Heart left ventricle (tissue), 16 donors: ENCODE measurements at regions of chr14 and their contacts with region 1.

Region 1: GRCh38 chr14:102196039-102196901 is 56.6 kb downstream of the WDR20 start:
- DNase-seq: no peak
- ATAC-seq: no peak
- H3K4me3 ChIP-seq: no peak overlapping the region
- H3K27ac ChIP-seq: no peak overlapping the region
- H3K4me1 ChIP-seq: peaks cover 0 to 26% (median 6%) of the 10 kb centered on the region in 12 donors
- H3K27me3 ChIP-seq: no peaks in the 10 kb centered on the region
- CTCF ChIP-seq: no peak
- POLR2A ChIP-seq: no peak

Region 2: DNA sequence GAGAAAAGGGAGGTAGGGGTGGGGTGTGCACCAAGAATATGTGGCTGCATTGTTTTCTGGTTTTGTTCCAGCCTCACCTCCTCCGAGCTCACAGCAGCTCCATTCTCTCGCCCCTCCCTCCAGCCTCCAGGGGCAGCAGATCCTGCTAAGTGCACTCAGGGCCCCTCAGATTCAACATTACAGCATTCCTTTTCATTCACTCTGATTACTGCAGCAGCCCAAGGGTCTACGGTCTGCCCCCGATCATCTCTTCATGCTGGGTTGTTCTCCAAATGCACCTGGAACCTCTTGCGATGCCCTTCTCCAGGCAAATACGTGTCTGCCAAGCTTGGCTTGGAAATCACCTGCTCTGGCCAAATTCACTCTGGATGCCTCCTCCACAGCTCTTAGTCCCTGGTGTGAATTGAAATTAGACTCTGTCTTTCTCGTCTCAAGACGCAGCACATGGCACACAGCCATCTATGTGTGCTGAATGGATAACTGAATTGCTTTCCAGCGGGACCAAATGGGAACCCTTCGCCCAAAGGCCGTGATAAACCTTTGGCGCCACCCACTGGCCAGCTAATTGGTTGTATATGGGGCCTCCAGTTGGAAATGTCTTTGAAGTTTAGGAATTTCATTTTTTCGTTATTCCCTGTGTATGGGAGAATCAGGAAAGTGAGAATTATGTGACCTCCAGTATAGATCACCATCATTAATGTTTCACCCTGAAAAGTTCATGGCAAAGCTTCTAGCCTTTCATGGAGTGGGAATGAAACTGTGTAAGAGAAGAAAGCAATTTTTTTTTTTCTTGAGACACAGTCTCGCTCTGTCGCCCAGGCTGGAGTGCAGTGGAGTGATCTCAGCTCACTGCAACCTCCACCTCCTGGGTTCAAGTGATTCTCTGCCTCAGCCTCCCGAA is 99.8 kb before region 1 on chr14:
- intact Hi-C with region 1: no loop called
- DNase-seq: peak; percentile 83 to 91 (median 87)
- ATAC-seq: peak; percentile 81 to 91 (median 86)
- H3K4me3 ChIP-seq: no peak overlapping the region
- H3K27ac ChIP-seq: no peak overlapping the region
- H3K4me1 ChIP-seq: peaks cover 0 to 9% (median 0%) of the 10 kb centered on the region in 12 donors
- H3K27me3 ChIP-seq: no peaks in the 10 kb centered on the region
- CTCF ChIP-seq: peak; percentile 69 to 91 (median 83)
- POLR2A ChIP-seq: no peak

Region 3: DNA sequence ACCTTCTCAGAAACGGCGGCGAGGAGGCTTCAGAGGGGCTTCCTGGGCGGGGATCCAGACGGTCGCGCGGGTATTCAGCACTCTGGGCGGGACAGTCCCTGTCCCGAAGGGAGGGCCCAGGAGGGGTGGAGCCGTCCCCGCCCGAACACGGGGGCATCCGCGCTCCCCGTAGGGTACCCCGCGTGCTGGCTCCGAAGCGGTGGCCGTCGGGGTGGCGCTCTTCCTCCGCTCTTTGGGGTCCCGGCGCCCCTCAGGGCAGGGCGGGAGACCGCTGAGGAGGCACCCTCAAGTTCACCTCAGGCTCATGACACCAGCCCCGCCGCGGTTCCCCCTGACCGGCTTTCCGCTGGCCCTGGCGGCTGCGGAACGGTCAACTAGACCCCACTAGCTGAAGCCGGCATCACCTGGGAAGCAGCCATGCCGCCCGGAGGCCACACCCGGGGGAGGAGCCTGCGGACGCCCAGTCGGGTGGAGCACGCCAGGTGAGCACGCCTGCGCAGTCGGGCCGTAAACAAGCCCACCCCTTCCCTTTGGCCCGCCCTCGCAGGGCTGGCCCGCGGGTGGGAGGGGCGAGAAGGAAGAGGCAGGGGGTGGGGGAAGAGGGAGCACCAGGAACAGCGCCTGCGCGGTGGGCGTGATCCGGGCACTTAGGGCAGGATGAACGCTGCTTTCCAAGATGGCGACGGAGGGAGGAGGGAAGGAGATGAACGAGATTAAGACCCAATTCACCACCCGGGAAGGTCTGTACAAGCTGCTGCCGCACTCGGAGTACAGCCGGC is 56.8 kb before region 1 on chr14 and contains the start of gene WDR20:
- intact Hi-C with region 1: loop called in 1 of 10 experiments (anchors 5 kb)
- DNase-seq: peak; percentile 98 to 99 (median 99)
- ATAC-seq: peak; percentile 99 to 100 (median 100)
- H3K4me3 ChIP-seq: peak within 1 kb of the TSS; percentile 74 to 100 (median 96)
- H3K27ac ChIP-seq: peak within 1 kb of the TSS; percentile 30 to 92 (median 86)
- H3K4me1 ChIP-seq: peaks cover 0 to 35% (median 22%) of the 10 kb centered on the region in 12 donors
- H3K27me3 ChIP-seq: no peaks in the 10 kb centered on the region
- CTCF ChIP-seq: no peak
- POLR2A ChIP-seq: peak in 1 of 2 donors; percentile 49
- total RNA-seq, gene WDR20: 15.8 to 26.5 (median 21.2) TPM

Region 4: GRCh38 chr14:102154821-102155549 is 41.3 kb before region 1 on chr14:
- intact Hi-C with region 1: no loop called
- DNase-seq: no peak
- ATAC-seq: peak in 2 of 4 donors; percentile 33 to 38
- H3K4me3 ChIP-seq: no peak overlapping the region
- H3K27ac ChIP-seq: peak overlapping the region in 1 of 12 donors; percentile 7
- H3K4me1 ChIP-seq: peaks cover 0 to 66% (median 22%) of the 10 kb centered on the region in 12 donors
- H3K27me3 ChIP-seq: no peaks in the 10 kb centered on the region
- CTCF ChIP-seq: no peak
- POLR2A ChIP-seq: no peak